Sigmoid colon (tissue), 7 donors: ENCODE measurements at regions of chr16 and their contacts with region 1.

Region 1: DNA sequence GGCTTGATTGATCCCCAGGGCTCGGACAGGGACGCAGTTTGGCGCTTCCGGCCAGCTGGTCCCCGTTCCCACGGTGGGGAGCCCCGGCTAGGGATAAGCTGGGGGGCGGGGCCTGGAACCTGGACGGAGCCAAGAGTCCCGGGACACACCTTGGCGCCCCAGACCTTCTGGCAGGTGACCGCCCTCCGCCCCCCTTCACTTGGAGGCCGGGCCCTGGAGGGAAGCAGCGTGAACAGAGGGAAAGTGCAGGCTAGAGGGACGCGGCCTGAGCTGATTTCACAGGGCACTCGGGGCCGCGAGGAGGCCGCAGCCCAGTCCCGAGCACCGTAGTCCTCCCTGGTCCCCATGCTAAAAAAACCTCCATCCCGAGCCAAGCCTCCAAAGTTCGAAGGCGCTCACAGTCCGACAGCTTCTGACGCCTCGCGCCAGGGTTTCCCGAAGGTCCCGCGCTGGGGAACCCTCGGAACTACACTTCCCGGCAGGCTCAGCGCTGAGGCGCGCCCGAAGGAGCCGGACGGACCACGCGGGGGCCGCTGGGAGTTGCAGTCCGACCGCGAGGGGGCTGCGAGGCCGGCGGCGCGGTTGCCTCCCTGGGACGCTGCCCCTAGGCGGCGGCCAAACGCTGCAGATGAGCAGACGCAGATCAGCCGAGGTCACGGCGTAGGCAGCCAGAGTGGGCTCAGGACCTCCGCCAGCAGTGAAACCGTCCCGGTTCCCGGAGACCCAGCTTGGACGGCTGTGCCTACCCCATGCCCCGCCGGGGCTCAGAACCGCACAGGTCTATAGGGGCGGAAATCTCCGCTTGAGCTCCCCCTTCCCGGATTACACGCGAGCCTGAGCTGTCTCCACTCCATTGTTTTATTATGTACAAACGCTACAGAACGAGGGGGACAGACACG is at the start of gene TBX6:
- DNase-seq: peak; percentile 96
- H3K4me3 ChIP-seq: peak within 1 kb of the TSS; percentile 35 to 65 (median 50)
- H3K27ac ChIP-seq: peak within 1 kb of the TSS; percentile 81 to 97 (median 87)
- H3K4me1 ChIP-seq: peaks cover 0 to 51% (median 46%) of the 10 kb centered on the region in 4 donors
- H3K27me3 ChIP-seq: no peaks in the 10 kb centered on the region
- CTCF ChIP-seq: peak; percentile 76 to 92 (median 85)
- EP300 ChIP-seq: no peak
- POLR2A ChIP-seq: no peak
- total RNA-seq, gene TBX6: 0.54 to 1.7 (median 1.1) TPM

Region 2: DNA sequence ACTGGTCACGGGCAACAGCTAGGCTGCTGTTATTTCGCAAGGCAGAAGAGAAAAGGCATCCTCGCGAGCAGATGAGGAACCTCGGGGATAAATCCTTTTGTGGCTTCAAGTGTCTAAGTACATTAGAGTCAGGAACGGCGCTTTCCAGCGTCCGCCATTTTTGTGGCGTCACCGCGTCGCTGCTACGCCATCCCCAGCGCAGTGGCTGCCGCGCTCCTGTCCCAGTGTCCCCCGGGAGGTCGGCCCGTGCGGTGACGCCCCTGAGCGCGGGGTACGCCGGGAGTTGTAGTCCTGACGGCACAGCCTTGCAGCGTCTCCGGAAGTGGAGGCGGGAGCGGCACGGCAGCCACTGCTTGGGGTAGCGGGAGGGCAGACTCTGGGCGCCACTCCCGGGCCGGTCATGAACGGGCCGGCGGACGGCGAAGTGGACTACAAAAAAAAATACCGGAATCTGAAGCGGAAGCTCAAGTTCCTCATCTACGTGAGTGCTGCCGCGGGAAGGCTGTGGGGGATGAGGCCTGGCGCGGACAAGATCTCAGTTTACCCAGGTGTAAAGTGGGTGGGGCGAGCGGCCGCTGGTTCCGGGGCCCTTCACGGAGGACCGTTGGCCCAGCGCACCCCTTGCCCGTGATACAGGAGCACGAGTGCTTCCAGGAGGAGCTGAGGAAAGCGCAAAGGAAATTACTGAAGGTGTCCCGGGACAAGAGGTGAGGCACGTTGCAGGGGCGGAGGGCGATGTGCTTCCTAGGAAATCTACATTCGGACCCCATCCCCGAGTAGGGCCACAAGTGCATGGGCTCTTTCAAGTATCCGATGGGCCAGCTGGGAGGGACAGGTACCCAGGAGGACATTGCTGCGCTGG is 95.6 kb before region 1 on chr16 and contains the start of gene INO80E:
- intact Hi-C with region 1: loop called (anchors 10 kb)
- DNase-seq: peak; percentile 99
- H3K4me3 ChIP-seq: peak within 1 kb of the TSS; percentile 74 to 96 (median 80)
- H3K27ac ChIP-seq: peak within 1 kb of the TSS; percentile 95 to 98 (median 95)
- H3K4me1 ChIP-seq: peaks cover 0 to 34% (median 25%) of the 10 kb centered on the region in 4 donors
- H3K27me3 ChIP-seq: no peaks in the 10 kb centered on the region
- CTCF ChIP-seq: no peak
- EP300 ChIP-seq: peak in 1 of 4 donors; percentile 28
- POLR2A ChIP-seq: peak; percentile 8 to 28
- total RNA-seq, gene INO80E: 49.2 to 174 (median 54.7) TPM

Region 3: DNA sequence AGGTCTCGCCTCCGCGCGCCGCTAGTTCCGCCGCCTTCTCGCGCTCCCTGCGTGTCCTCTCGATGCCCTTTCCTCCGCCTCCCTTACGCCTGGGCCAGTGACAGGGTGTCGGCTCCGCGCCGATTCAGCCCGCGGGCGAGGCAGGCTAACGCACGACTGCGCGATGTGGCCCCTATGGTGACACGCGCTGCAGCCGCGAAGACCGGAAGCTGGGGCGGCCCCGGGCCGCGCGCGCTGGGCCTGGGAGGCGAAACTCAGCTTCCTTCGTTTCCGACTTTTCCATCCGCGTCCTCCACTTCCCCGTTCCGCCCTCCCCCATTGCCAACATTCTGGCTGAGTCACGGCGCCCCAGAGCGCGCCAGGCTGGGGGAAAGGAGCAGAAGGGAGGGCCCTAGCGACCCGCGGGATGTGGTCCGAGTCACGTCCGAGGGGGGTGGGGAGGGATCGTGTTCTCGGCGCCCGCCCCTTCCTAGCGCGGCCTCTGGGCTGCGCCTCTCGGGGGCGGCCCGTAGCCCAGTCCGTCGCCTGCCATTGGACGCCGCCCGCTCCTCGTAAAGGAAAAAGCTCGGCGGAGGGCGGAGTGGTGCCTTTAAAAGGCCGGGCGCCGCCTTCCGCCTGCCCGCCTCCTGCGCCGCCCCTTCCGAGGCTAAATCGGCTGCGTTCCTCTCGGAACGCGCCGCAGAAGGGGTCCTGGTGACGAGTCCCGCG is 26.4 kb before region 1 on chr16 and contains the start of gene ALDOA:
- intact Hi-C with region 1: loop called (anchors 2 kb)
- DNase-seq: peak; percentile 99
- H3K4me3 ChIP-seq: peak within 1 kb of the TSS; percentile 73 to 98 (median 82)
- H3K27ac ChIP-seq: peak within 1 kb of the TSS; percentile 96 to 100 (median 98)
- H3K4me1 ChIP-seq: peaks cover 0 to 56% (median 48%) of the 10 kb centered on the region in 4 donors
- H3K27me3 ChIP-seq: no peaks in the 10 kb centered on the region
- CTCF ChIP-seq: no peak
- EP300 ChIP-seq: peak in 2 of 4 donors; percentile 49 to 77
- POLR2A ChIP-seq: peak in 1 of 2 donors; percentile 99
- total RNA-seq, gene ALDOA: 905 to 1,010 (median 960) TPM

Region 4: GRCh38 chr16:30370444-30371247 is 278.9 kb after region 1 on chr16 and contains the start of gene TBC1D10B:
- intact Hi-C with region 1: loop called (anchors 10 kb)
- DNase-seq: peak; percentile 100
- H3K4me3 ChIP-seq: peak within 1 kb of the TSS; percentile 62 to 99 (median 96)
- H3K27ac ChIP-seq: peak within 1 kb of the TSS; percentile 85 to 94 (median 90)
- H3K4me1 ChIP-seq: peaks cover 0 to 49% (median 42%) of the 10 kb centered on the region in 4 donors
- H3K27me3 ChIP-seq: no peaks in the 10 kb centered on the region
- CTCF ChIP-seq: no peak
- EP300 ChIP-seq: no peak
- POLR2A ChIP-seq: peak in 1 of 2 donors; percentile 20
- total RNA-seq, gene TBC1D10B: 14.5 to 25.2 (median 19.2) TPM

Region 5: DNA sequence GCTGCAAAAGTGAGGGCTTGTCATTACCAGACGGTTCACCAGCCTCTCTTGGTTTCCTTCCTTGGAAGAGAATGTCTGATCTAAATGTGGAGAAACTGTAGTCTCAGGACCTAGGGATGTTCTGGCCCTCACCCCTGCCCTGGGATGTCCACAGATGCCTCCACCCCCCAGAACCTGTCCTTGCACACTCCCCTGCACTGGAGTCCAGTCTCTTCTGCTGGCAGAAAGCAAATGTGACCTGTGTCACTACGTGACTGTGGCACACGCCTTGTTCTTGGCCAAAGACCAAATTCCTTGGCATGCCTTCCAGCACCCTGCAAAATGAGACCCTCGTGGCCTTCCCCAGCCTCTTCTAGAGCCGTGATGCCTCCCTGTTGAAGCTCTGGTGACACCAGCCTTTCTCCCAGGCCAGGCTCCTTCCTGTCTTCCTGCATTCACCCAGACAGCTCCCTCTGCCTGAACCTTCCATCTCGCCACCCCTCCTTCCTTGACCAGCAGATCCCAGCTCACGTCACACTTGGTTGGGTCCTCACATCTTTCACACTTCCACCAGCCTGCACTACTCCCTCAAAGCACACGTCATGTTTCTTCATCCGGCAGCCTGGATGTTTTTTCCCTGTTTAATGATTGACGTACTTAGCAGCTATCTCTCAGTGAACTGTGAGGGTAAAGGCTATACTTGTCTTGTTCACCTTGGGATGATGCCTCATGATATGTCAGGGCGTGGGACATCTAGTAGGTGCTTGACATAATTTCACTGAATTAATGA is 430.3 kb after region 1 on chr16:
- intact Hi-C with region 1: no loop called
- DNase-seq: no peak
- H3K4me3 ChIP-seq: no peak overlapping the region
- H3K27ac ChIP-seq: no peak overlapping the region
- H3K4me1 ChIP-seq: peaks cover 0 to 15% (median 6%) of the 10 kb centered on the region in 4 donors
- H3K27me3 ChIP-seq: no peaks in the 10 kb centered on the region
- CTCF ChIP-seq: no peak
- EP300 ChIP-seq: no peak
- POLR2A ChIP-seq: no peak

Region 6: DNA sequence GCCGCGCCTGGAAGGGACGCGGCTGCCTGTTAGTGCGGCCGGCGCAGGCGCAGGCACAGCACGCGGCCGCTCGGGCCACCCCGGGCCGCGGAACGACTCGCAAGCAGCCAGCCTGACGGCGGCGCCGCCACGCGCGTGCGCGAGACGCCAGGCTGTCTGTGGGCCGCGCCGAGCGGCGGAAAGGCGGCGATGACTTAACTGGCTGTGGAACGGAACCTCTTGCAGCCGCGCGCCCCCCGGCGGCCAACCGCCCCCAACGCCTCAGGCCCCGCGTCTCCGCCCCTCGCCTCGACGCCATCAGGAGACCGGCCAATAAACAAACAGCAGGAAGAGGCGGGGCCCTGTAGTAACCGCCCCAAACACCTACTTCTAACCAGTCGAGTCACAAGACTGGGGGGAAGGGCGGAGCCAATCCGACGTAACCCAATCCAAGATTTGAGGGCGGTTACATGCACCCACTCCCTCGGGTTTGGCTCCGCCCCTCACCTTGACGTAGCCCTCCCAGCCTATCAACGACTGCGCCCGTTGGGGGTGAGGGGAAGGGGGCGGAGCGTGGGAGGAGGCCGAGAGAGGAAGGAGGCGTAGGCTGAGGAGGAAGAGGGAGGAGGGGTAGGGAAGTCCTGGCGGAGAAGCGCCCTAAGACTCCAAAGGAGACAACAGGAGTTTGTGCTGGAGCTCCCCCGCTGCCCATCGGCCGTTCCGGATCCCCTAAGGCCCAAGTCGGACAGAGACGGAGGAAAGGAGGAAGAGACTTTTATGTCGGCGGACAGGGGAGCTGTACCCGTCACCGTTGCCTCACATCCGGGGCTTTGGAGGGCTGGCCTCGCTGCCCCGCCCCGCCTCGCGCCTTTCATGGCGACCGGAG is 566.4 kb after region 1 on chr16 and contains the start of gene FBRS:
- intact Hi-C with region 1: loop called (anchors 10 kb)
- DNase-seq: peak; percentile 100
- H3K4me3 ChIP-seq: peak within 1 kb of the TSS; percentile 91 to 99 (median 97)
- H3K27ac ChIP-seq: peak within 1 kb of the TSS; percentile 96 to 98 (median 97)
- H3K4me1 ChIP-seq: peaks cover 0 to 58% (median 53%) of the 10 kb centered on the region in 4 donors
- H3K27me3 ChIP-seq: no peaks in the 10 kb centered on the region
- CTCF ChIP-seq: peak in 3 of 4 experiments; percentile 8 to 66 (median 38)
- EP300 ChIP-seq: peak in 2 of 4 donors; percentile 49 to 52
- POLR2A ChIP-seq: peak; percentile 78 to 94
- total RNA-seq, gene FBRS: 12.5 to 29.6 (median 22.7) TPM